Caco-2 (cell line): ENCODE measurements at regions of chr15 and their contacts with region 1.

Region 1: GRCh38 chr15:74950078-74951000 is 6.2 kb downstream of the RPP25 start:
- DNase-seq: peak; percentile 80 to 84
- H3K4me3 ChIP-seq: no peak overlapping the region
- H3K4me3 Mint-ChIP-seq: no peak overlapping the region
- H3K27ac Mint-ChIP-seq: no peak overlapping the region
- H3K4me1 ChIP-seq: peaks cover 14% of the 10 kb centered on the region
- H3K4me1 Mint-ChIP-seq: peaks cover 14% of the 10 kb centered on the region
- H3K27me3 ChIP-seq: no peaks in the 10 kb centered on the region
- H3K27me3 Mint-ChIP-seq: no peaks in the 10 kb centered on the region
- CTCF ChIP-seq: peak; percentile 92 to 96

Region 2: DNA sequence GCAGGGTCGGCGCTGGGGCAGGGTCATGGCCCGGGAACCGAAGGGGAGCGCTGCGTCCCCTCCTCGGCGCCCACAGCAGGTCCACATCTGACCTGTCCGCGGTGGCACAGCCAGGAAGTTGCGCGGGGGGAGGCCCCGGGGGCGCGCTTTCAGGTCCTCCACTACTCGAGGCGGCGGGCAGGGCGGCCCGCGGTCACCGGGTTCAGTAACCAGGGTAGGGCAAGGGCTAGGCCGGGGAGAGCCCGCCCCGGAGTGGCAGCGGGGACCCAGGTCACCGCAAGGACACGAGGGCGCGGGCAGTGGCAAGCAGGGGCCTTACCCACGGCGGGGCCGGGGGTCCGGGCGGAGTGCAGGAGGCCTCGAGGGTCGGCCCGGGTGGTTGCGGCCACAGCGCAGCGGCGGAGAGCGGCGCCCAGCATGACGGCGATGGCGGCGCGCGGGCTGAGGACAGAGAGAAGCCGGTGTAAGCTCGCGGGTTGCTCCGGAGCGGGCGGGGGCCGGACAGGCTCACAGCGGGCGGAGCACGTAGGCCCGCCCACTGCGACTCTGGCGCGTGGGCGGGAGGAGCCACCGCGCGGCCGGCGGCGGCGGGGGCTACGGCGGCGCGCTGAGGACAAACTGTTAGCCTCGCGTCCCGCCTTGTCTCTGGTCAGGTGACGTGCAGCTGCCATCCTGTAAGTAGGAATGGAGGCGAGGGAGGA is 12.6 kb before region 1 on chr15 and contains the start of gene COX5A:
- CTCF ChIA-PET with region 1: interaction called, 6 read pairs
- POLR2A ChIA-PET with region 1: interaction called, 7 read pairs
- intact Hi-C with region 1: loop called (anchors 1 kb)
- DNase-seq: peak; percentile 93 to 94
- H3K4me3 ChIP-seq: peak within 1 kb of the TSS; percentile 86
- H3K4me3 Mint-ChIP-seq: peak within 1 kb of the TSS; percentile 85
- H3K27ac Mint-ChIP-seq: peak within 1 kb of the TSS; percentile 79
- H3K4me1 ChIP-seq: peaks cover 17% of the 10 kb centered on the region
- H3K4me1 Mint-ChIP-seq: peaks cover 6% of the 10 kb centered on the region
- H3K27me3 ChIP-seq: no peaks in the 10 kb centered on the region
- H3K27me3 Mint-ChIP-seq: no peaks in the 10 kb centered on the region
- CTCF ChIP-seq: no peak
- total RNA-seq, gene COX5A: 306 and 318 TPM in 2 replicates